Dorsolateral prefrontal cortex (tissue), 120 donors: ENCODE measurements at regions of chr13 and their contacts with region 1.

Region 1: GRCh38 chr13:35164324-35164932 is 222.4 kb downstream of the NBEA start:
- DNase-seq: no peak
- H3K4me3 ChIP-seq: no peak overlapping the region
- H3K27ac ChIP-seq: no peak overlapping the region
- H3K27me3 ChIP-seq: no peaks in the 10 kb centered on the region
- CTCF ChIP-seq: peak; percentile 57 to 88 (median 76)

Region 2: DNA sequence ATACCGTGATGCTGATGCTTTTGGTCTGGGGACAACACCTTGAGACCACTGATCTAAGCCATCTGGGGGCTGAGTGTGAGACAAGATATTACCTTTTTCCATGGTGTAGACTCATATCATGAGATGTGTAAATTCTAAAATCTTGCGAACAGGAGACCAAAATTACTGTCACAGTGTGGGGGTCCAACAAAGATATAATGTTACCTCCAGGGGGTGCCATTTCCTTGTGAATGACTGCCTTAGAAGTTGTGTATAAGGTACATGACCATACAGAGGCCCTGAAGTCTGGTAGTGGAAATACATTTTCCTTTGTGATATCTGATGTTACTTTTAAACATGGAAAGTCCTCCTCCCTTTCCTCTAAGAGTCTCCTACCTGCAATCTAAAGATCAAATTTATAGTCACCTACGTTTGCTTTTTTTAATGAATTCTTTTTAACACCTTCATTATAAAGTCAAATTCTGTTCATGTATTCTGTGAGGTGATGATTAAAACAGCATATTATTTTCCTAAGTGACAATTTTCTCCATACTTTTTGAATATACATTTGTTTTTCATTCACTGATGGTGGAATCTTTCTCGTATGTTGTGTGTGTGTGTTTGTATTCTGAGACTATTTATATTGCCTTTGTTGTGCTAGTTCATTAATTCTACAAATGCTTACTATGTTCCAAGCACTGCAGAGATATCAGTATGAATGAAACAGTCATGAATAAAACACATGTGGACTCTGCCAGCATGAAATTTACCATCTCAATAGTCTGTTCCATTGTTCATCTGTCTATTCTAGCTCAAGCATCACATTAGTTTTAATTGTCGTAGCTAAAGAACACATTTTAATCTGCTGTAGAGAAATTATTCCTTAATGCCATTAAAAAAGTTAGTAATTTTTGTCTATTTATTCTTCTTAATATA is 1232.8 kb before region 1 on chr13:
- intact Hi-C with region 1: loop called (anchors 5 kb)
- DNase-seq: peak in 1 of 10 donors; percentile 23
- H3K4me3 ChIP-seq: no peak overlapping the region
- H3K27ac ChIP-seq: no peak overlapping the region
- H3K27me3 ChIP-seq: no peaks in the 10 kb centered on the region
- CTCF ChIP-seq: peak; percentile 10 to 72 (median 52)